ENCODE measurements at regions of chr9 and their contacts with region 1.

Region 1: DNA sequence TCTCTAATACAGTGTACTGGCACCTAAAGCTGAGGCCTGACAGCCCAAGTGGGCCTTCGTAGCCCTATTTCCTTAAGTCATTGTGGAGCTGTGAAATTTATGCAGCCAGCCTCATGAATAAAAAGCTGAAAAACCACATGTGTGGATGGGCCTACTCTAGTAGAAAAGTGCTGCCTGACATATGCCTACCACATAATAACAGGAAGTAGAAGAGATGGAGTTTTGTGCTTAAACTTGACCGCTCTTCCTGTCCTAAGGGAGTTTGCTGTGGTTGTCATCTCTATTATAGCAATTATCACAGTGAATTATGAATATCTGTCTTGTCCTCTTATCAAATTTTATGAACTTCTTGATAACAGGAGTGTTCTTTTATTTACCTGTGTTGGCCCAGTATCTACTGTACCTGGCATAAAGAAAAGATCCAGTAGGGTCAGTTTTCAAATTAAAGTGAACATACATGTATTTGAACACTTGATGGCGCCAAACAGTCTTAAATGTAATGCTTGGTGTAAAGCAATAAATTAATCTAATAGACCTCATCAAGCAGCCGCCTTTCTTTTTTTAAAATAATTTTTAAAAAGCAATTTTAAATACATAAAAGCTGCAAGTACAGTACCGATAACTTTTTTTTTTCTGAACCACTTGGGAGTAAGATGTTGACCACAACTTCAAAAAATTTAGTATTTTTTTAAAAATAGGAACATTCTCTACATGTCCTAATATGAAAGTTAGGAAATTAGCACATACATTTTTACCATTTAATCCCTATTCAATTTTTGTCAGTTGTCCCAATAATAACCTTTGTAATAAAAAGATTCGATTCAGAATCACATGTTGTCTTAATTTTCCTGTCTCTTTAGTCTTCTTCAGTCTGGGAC is 51.0 kb downstream of the FKTN start:
- DNase-seq: no peak
- H3K4me3 ChIP-seq: no peak overlapping the region
- H3K27ac ChIP-seq: no peak overlapping the region
- H3K4me1 ChIP-seq: no peaks in the 10 kb centered on the region
- H3K27me3 ChIP-seq: no peaks in the 10 kb centered on the region
- CTCF ChIP-seq: peak; percentile 31 to 53 (median 37)

Region 2: GRCh38 chr9:105716146-105716545 is 107.2 kb after region 1 on chr9:
- intact Hi-C with region 1: loop called (anchors 5 kb)
- DNase-seq: no peak
- H3K4me3 ChIP-seq: no peak overlapping the region
- H3K27ac ChIP-seq: no peak overlapping the region
- H3K4me1 ChIP-seq: no peaks in the 10 kb centered on the region
- H3K27me3 ChIP-seq: no peaks in the 10 kb centered on the region
- CTCF ChIP-seq: no peak

Region 3: DNA sequence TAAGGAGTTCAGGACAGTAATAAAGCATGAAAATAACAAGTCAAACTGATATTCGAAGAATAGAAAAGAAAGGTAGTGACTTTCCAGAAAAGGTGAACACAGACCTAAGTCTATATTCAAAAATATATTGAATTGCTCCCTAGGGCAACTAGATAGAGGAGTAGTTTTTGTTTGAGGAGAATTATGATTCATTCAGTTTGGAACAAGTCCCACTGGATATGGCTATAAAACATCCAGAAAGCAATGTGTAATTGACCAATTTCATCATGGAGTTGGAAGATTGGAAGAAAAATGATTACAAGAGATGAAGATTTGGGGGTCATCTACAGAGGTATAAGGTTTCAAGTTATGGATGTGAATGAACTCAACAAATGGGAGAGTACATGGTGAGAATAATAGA is 1136.5 kb after region 1 on chr9:
- intact Hi-C with region 1: no loop called
- DNase-seq: no peak
- H3K4me3 ChIP-seq: no peak overlapping the region
- H3K27ac ChIP-seq: no peak overlapping the region
- H3K4me1 ChIP-seq: no peaks in the 10 kb centered on the region
- H3K27me3 ChIP-seq: no peaks in the 10 kb centered on the region
- CTCF ChIP-seq: no peak